Activated T-helper 1 cell treated with anti-CD3 and anti-CD28 coated beads, Interleukin-12 subunit alpha, Interleukin-12 subunit beta, Interleukin-2, Interleukin-4 antibody, amounts not matched to agents 30 ng/mL and 10 ng/mL and 1 ng/mL, durations not matched to agents 14 hours and 24 hours and 36 hours (primary cell): ENCODE measurements at regions of chr3 and their contacts with region 1.

Region 1: DNA sequence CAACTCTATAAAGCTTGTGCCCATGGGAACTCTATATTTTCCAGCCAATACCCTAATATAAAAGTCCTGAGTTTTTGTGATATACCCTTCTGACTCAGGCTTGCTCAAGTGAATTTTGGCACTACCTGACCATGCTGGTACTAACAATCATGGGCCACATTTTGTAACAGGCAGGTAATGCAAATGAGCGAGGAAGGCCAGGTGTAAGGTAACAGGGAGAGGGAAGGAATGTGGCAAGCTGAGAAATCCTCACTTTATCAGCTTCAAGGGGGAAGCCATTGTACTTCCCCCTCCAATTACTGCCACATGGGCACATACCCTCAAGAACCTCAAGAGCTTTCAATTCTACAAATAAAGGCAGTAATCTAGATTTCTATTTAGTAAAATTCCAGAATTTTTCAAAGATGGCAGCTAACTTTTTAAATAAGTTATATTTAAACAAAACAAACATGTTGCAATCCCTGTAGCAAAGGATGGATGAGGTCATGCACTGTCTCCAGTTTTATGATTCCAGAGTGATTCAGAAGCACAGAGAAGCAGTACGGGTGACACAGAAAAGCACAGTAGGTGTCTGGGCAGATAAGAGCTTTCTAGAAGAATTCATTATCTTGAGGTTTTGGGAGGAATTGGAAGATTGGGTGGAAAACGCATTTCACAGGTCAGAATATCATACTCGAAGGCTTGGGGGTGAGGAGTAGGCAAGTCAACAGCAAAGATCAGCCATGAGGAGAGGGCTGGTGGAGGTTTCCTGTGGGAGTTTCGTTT is 87.6 kb downstream of the FOXP1 start:
- DNase-seq: peak; percentile 4
- H3K4me3 Mint-ChIP-seq: peak overlapping the region; percentile 22
- H3K27ac Mint-ChIP-seq: peak overlapping the region; percentile 40
- H3K4me1 Mint-ChIP-seq: peaks cover 57% of the 10 kb centered on the region
- H3K27me3 Mint-ChIP-seq: peaks cover 6% of the 10 kb centered on the region

Region 2: DNA sequence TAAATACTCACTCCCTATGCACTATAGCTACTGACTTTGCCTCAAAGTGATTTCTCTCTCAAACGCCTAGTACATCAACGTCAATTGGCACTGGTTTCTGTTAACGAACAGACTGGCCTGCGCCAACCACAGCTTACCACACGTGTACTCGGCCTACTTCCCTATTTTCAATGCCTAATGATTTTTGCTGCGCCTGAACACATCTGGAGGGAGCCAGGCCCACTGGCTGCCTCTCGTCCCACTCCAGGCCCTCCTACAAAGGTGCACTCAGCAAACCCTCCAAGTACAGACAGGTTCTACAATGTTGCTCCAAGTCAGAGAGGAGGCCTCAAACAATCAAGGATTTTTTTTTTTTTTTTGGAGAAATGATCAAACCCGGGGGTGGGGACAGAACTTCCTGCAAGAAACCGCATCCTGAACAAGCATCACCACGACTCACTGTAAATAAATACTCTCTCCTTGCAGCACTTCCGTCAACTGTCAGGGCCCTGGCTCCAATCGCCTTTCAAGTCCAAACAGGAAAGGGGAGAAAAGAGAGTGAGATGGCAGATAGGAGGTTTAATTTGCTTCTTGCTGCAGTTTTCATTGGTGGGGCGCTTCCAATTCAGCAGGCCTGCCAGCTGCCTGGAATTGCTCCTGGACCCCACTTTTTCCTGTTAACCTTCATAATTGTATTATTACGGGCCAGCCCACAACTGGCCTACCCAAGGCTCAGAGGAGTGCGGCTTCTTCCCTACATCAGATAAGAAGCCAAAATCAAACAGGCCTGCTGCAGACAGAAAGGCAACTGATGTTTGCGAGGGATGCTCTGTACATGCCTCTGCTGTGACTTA is 51.6 kb before region 1 on chr3:
- intact Hi-C with region 1: loop called (anchors 1 kb)
- DNase-seq: peak; percentile 71
- H3K4me3 Mint-ChIP-seq: peak overlapping the region; percentile 74
- H3K27ac Mint-ChIP-seq: peak overlapping the region; percentile 95
- H3K4me1 Mint-ChIP-seq: peaks cover 73% of the 10 kb centered on the region
- H3K27me3 Mint-ChIP-seq: peaks cover 8% of the 10 kb centered on the region

Region 3: GRCh38 chr3:71478568-71478967 is 17.3 kb before region 1 on chr3:
- intact Hi-C with region 1: loop called (anchors 2 kb)
- DNase-seq: no peak
- H3K4me3 Mint-ChIP-seq: no peak overlapping the region
- H3K27ac Mint-ChIP-seq: peak overlapping the region; percentile 58
- H3K4me1 Mint-ChIP-seq: peaks cover 23% of the 10 kb centered on the region
- H3K27me3 Mint-ChIP-seq: peaks cover 4% of the 10 kb centered on the region